ENCODE measurements at regions of chr14 and their contacts with region 1.

Region 1: GRCh38 chr14:24678801-24679247 is 44.8 kb upstream of the GZMB start:
- DNase-seq: peak; percentile 75
- H3K4me3 Mint-ChIP-seq: peak overlapping the region; percentile 76
- H3K27ac Mint-ChIP-seq: peak overlapping the region; percentile 86
- H3K4me1 Mint-ChIP-seq: peaks cover 60% of the 10 kb centered on the region
- H3K27me3 Mint-ChIP-seq: no peaks in the 10 kb centered on the region

Region 2: GRCh38 chr14:24481622-24482324 is 197.1 kb before region 1 on chr14:
- intact Hi-C with region 1: loop called (anchors 5 kb)
- DNase-seq: peak; percentile 35
- H3K4me3 Mint-ChIP-seq: peak overlapping the region; percentile 41
- H3K27ac Mint-ChIP-seq: no peak overlapping the region
- H3K4me1 Mint-ChIP-seq: peaks cover 19% of the 10 kb centered on the region
- H3K27me3 Mint-ChIP-seq: no peaks in the 10 kb centered on the region

Region 3: DNA sequence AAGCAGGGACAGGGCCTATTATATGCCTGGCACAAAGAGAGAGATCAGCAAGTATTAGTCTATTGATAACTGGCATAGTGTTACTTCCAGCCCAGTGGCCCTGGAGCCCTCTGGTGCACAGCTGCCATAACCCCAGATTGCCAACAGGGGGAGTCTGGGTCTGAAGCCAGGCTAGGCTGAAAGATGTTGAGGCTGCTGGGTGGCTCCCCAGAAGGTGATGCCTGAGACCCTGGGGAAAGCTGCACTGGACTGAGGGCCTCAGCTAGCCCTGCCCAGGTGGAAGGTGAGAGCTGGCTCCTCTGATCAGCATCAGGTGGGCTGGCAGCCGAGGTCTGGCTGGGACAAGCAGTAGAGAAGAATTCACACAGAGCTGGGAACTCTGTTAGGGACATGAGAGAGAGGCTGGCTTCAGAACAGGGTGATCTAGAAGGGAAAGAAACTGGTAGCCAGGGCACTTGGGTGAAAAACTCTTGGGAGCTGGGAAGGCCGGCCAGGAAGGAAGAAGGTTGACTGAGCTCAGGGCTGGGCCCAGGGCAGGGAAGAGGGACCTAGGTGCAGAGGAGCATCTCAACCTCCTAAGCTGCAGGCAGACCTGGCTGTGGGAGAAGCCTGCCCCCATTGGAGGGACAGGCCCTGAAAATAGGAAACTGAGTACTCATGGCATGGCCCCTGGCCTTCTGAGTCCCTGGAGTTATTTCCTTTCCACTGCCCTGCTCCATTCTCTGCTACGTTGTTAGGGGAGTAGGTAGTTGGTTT is 73.2 kb before region 1 on chr14:
- intact Hi-C with region 1: loop called (anchors 1 kb)
- DNase-seq: peak; percentile 63
- H3K4me3 Mint-ChIP-seq: peak overlapping the region; percentile 74
- H3K27ac Mint-ChIP-seq: peak overlapping the region; percentile 88
- H3K4me1 Mint-ChIP-seq: peaks cover 49% of the 10 kb centered on the region
- H3K27me3 Mint-ChIP-seq: peaks cover 1% of the 10 kb centered on the region

Region 4: GRCh38 chr14:24789378-24789884 is 110.6 kb after region 1 on chr14:
- intact Hi-C with region 1: no loop called
- DNase-seq: no peak
- H3K4me3 Mint-ChIP-seq: no peak overlapping the region
- H3K27ac Mint-ChIP-seq: no peak overlapping the region
- H3K4me1 Mint-ChIP-seq: no peaks in the 10 kb centered on the region
- H3K27me3 Mint-ChIP-seq: peaks cover 9% of the 10 kb centered on the region

Measured in activated T-helper 2 cell treated with anti-CD3 and anti-CD28 coated beads, Interferon-gamma antibody, Interleukin-2, Interleukin-4, amounts not matched to agents 10 μg/mL and 5 μg/mL and 100 μg/mL, durations not matched to agents 14 hours and 24 hours and 36 hours (primary cell).